Naive thymus-derived CD4-positive, alpha-beta T cell (primary cell): ENCODE measurements at regions of chr20 and their contacts with region 1.

Region 1: DNA sequence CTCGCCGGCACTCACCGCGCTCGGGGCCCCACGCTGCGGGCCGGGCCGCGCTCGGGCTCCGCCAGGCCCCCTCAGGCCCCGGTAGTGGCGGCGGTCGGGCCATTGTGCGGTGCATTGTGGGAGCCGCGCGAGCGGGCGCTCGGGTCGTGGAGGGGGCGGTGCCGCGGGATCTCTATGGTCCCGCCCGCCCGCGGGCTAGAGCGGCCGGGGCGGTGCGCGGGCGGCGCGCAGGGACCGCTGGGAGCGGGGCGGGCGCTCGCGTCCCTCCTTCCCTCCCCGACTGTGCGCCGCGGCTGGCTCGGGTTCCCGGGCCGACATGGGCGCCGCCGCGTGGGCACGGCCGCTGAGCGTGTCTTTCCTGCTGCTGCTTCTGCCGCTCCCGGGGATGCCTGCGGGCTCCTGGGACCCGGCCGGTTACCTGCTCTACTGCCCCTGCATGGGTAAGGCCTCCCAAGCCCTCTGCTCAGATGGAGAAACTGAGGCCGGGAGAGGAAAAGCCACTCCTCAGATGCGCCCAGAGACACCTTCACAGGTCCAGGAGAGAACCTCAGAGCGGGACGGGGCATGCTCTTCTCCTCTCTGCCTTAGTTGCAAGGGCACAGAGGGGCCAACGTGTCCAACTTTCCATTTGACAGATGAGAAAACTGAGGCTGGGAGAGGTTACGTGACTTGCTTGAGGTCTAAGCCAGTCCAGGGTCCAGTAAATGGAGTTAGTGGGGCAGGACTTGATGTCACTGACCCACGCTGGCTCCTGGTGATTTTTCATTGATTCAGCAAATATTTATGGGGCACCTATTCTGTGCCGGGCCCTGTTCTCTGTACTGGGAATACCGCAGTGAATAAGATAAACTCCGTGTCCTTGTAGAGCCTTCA is at the starts of genes PLAGL2 and POFUT1:
- DNase-seq: peak; percentile 82 to 96 (median 88)
- ATAC-seq: peak; percentile 99
- H3K4me3 ChIP-seq: peak within 1 kb of the TSS; percentile 94
- H3K4me3 Mint-ChIP-seq: peak within 1 kb of the TSS; percentile 90 to 100 (median 96)
- H3K27ac ChIP-seq: peak within 1 kb of the TSS; percentile 91
- H3K27ac Mint-ChIP-seq: peak within 1 kb of the TSS; percentile 89 to 95 (median 92)
- H3K4me1 ChIP-seq: peaks cover 23 to 35% of the 10 kb centered on the region in 2 donors
- H3K4me1 Mint-ChIP-seq: peaks cover 66 to 83% (median 77%) of the 10 kb centered on the region in 7 donors
- H3K27me3 ChIP-seq: no peaks in the 10 kb centered on the region
- H3K27me3 Mint-ChIP-seq: no peaks in the 10 kb centered on the region
- total RNA-seq, gene PLAGL2: 15.6 to 30.1 (median 17.6) TPM
- total RNA-seq, gene POFUT1: 12.5 to 32.2 (median 19.7) TPM

Region 2: DNA sequence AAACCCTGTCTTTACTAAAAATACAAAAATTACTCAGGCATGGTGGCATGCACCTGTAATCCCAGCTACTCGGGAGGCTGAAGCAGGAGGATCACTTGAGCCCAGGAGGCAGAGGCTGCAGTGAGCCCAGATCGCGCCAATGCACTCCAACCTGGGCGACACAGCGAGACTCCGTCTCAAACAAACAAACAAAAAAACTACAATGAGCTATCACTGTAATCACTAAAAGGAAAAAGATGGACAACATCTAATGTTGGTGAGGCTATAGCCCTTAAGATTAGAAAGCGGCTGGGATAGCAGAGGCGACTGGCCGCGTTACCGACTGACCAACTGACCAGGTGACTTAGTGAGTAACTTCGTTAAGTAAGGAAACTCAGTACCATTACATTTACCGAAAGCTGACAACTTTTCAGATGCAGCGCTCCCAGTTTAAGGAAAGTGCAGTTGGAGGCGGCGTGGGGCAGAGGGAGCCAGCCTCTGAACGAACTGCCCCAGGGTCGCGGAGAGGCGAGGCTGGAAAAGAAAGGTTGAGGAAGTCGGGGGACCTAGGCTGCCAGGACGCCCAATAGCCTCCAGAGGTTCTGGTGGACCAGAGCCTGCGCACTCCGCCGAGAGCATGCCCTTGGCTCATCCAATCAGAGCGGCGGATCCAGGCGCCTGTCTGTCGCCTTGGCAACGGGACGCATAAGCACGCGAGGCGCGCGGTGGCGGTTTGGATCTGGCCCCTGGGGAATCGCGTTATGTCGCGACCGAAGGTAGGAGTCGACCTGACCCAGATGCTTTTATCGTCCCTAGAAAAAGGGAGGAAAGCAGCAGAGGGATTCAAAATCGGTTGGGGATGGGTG is 328.5 kb before region 1 on chr20:
- CTCF ChIA-PET with region 1: no interaction called
- POLR2A ChIA-PET with region 1: no interaction called
- intact Hi-C with region 1: loop called in 1 of 2 experiments (anchors 1 kb)
- DNase-seq: peak; percentile 55 to 77 (median 71)
- ATAC-seq: peak; percentile 93
- H3K4me3 ChIP-seq: peak overlapping the region; percentile 68
- H3K4me3 Mint-ChIP-seq: peak overlapping the region; percentile 89 to 97 (median 94)
- H3K27ac ChIP-seq: peak overlapping the region; percentile 27
- H3K27ac Mint-ChIP-seq: peak overlapping the region; percentile 32 to 92 (median 79)
- H3K4me1 ChIP-seq: no peaks in the 10 kb centered on the region
- H3K4me1 Mint-ChIP-seq: peaks cover 6 to 17% (median 12%) of the 10 kb centered on the region in 7 donors
- H3K27me3 ChIP-seq: no peaks in the 10 kb centered on the region
- H3K27me3 Mint-ChIP-seq: peaks cover 0 to 53% (median under 1%) of the 10 kb centered on the region in 5 donors

Region 3: GRCh38 chr20:31972471-31973021 is 235.3 kb before region 1 on chr20:
- CTCF ChIA-PET with region 1: no interaction called
- POLR2A ChIA-PET with region 1: no interaction called
- intact Hi-C with region 1: no loop called
- DNase-seq: no peak
- ATAC-seq: no peak
- H3K4me3 ChIP-seq: no peak overlapping the region
- H3K4me3 Mint-ChIP-seq: no peak overlapping the region
- H3K27ac ChIP-seq: no peak overlapping the region
- H3K27ac Mint-ChIP-seq: no peak overlapping the region
- H3K4me1 ChIP-seq: no peaks in the 10 kb centered on the region
- H3K4me1 Mint-ChIP-seq: peaks cover 0 to 6% (median 5%) of the 10 kb centered on the region in 7 donors
- H3K27me3 ChIP-seq: no peaks in the 10 kb centered on the region
- H3K27me3 Mint-ChIP-seq: peaks cover 22 to 71% (median 46%) of the 10 kb centered on the region in 5 donors

Region 4: DNA sequence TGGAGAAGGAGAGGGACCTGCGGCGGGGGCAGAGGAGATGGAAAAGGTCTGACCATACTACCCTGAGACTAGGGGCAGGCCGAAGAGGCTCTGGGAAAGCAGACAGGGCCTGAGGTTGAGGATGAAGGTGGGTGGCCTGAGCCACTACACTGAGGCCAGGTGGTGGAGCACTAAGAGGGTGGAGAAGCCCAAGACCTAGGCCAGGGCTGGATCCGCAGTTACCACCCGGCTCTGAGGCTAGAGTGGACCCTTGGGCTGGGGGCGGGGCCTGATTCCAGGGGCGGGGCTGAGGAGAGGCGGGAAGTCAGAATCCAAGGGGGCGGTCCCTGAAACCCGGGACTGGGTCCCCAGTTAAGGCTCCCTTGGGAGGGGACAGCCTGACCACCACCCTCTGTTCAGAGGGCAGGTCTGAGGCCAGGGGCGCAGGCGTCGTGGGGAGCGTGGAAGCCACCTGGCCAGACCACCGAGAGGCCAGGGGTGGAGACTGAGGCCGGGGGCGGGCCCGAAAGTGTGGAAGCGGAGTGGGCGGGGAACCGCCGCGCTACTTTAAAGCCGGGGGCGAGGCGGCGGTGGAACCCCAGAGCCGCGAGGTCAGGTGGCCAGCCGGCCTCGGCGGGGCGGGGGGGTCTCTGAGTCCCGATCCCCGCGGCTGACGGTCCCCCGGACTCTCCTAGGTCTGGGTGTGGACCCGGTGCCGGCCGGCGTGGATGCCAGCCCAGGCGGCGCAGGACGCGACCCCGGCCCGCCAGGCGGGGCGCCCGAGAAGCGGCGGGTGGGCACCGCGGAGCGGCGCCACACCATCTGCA is 189.4 kb before region 1 on chr20:
- CTCF ChIA-PET with region 1: no interaction called
- POLR2A ChIA-PET with region 1: no interaction called
- intact Hi-C with region 1: loop called in 1 of 2 experiments (anchors 1 kb)
- DNase-seq: peak in 8 of 9 donors; percentile 17 to 59 (median 36)
- ATAC-seq: peak; percentile 61
- H3K4me3 ChIP-seq: peak overlapping the region; percentile 48
- H3K4me3 Mint-ChIP-seq: peak overlapping the region; percentile 54 to 91 (median 82)
- H3K27ac ChIP-seq: no peak overlapping the region
- H3K27ac Mint-ChIP-seq: no peak overlapping the region
- H3K4me1 ChIP-seq: peaks cover 0 to 6% of the 10 kb centered on the region in 2 donors
- H3K4me1 Mint-ChIP-seq: peaks cover 10 to 28% (median 23%) of the 10 kb centered on the region in 7 donors
- H3K27me3 ChIP-seq: peaks cover 0 to 3% of the 10 kb centered on the region in 2 donors
- H3K27me3 Mint-ChIP-seq: peaks cover 66 to 81% (median 70%) of the 10 kb centered on the region in 5 donors

Region 5: GRCh38 chr20:32189691-32190615 is 17.9 kb before region 1 on chr20:
- CTCF ChIA-PET with region 1: no interaction called
- POLR2A ChIA-PET with region 1: interaction called, 4 read pairs
- intact Hi-C with region 1: loop called in 1 of 2 experiments (anchors 1 kb)
- DNase-seq: peak; percentile 19 to 58 (median 52)
- ATAC-seq: peak; percentile 64
- H3K4me3 ChIP-seq: peak overlapping the region; percentile 55
- H3K4me3 Mint-ChIP-seq: peak overlapping the region; percentile 64 to 91 (median 86)
- H3K27ac ChIP-seq: peak overlapping the region; percentile 82
- H3K27ac Mint-ChIP-seq: peak overlapping the region; percentile 73 to 97 (median 91)
- H3K4me1 ChIP-seq: peaks cover 10 to 18% of the 10 kb centered on the region in 2 donors
- H3K4me1 Mint-ChIP-seq: peaks cover 11 to 50% (median 26%) of the 10 kb centered on the region in 7 donors
- H3K27me3 ChIP-seq: no peaks in the 10 kb centered on the region
- H3K27me3 Mint-ChIP-seq: no peaks in the 10 kb centered on the region

Region 6: DNA sequence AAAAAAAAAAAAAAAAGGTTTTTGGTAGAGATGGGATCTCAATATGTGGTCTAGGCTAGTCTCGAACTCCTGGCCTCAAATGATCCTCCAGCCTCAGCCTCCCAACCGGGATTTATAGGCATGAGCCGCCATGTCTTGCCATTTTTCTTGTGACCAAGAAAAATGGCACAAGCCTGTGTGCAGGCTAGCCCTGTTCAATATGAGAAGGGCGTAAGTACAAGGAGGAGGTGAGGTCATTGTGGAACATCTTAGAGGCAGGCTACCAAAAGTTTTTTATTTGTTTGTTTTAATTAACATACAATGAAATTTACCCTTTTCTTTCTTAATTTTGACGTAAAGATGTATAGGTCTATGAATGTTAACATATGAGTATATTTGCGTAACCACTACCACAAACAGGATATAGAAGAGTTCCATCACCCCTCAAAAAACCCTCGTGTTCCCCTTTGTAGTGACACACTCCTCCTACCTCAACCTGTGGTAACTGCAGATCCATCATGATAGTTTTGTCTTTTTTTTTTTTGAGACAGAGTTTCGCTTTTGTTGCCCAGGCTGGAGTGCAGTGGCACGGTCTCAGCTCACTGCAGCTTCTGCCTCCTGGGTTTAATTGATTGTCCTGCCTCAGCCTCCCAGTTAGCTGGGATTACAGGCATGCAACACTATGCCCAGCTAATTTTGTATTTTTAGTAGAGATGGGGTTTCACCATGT is 41.3 kb after region 1 on chr20:
- CTCF ChIA-PET with region 1: no interaction called
- POLR2A ChIA-PET with region 1: no interaction called
- intact Hi-C with region 1: loop called in 1 of 2 experiments (anchors 2 kb)
- DNase-seq: peak in 8 of 9 donors; percentile 43 to 87 (median 78)
- ATAC-seq: peak; percentile 98
- H3K4me3 ChIP-seq: no peak overlapping the region
- H3K4me3 Mint-ChIP-seq: peak overlapping the region in 9 of 10 donors; percentile 18 to 68 (median 33)
- H3K27ac ChIP-seq: peak overlapping the region; percentile 38
- H3K27ac Mint-ChIP-seq: peak overlapping the region; percentile 39 to 92 (median 84)
- H3K4me1 ChIP-seq: no peaks in the 10 kb centered on the region
- H3K4me1 Mint-ChIP-seq: peaks cover 2 to 35% (median 28%) of the 10 kb centered on the region in 7 donors
- H3K27me3 ChIP-seq: no peaks in the 10 kb centered on the region
- H3K27me3 Mint-ChIP-seq: no peaks in the 10 kb centered on the region

Region 7: GRCh38 chr20:32484958-32485769 is 277.3 kb after region 1 on chr20:
- CTCF ChIA-PET with region 1: no interaction called
- POLR2A ChIA-PET with region 1: no interaction called
- intact Hi-C with region 1: loop called (anchors 1 to 2 kb)
- DNase-seq: peak; percentile 60 to 94 (median 91)
- ATAC-seq: peak; percentile 92
- H3K4me3 ChIP-seq: peak overlapping the region; percentile 55
- H3K4me3 Mint-ChIP-seq: peak overlapping the region; percentile 82 to 95 (median 92)
- H3K27ac ChIP-seq: peak overlapping the region; percentile 67
- H3K27ac Mint-ChIP-seq: peak overlapping the region; percentile 80 to 98 (median 88)
- H3K4me1 ChIP-seq: peaks cover 8 to 34% of the 10 kb centered on the region in 2 donors
- H3K4me1 Mint-ChIP-seq: peaks cover 20 to 58% (median 51%) of the 10 kb centered on the region in 7 donors
- H3K27me3 ChIP-seq: no peaks in the 10 kb centered on the region
- H3K27me3 Mint-ChIP-seq: peaks cover 0 to 5% (median 0%) of the 10 kb centered on the region in 5 donors